Activated CD4-positive, alpha-beta memory T cell treated with anti-CD3 and anti-CD28 coated beads, Interleukin-2, amount 10 ng/mL, durations not matched to agents 7 days and 5 days (primary cell): ENCODE measurements at regions of chr16 and their contacts with region 1.

Region 1: DNA sequence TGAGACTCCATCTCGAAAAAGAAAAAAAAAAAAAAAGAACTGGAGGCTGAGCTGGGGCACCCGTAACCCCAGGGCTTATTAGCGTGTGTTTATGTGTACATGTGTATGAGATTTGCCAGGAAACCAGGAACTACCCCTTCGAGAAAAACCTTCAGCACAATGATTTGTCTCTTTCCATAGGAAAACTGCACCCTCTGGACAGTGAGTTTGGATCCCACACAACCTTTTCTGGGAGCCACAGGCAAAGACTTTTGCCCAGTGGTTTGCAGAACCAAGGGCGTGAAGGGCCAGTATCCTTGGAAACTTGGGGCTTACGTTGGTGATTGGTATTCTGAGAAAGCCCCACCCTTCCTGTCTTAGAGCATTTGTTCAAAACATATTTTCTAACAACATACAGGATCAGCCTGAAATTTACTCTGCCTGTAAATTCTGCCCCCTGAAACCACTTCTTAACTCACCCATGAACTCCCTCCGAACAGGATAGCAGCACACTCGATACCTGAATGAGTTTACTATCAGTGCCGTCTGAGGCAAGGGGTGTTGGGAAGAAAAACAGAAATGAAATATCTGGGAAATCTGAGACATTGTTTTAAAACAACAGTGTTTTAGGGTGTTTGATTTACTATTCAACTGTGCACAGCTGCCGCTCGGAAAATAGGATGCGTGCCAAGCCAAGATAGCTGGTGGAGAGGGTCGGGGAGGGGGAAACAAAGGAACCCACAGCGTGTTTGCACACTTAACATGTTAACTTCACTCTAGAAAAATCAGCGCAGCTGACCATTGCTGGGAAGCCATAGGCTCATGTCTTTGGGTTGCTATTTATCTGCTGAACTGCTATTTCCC is 40.2 kb upstream of the MAF start:
- DNase-seq: peak; percentile 50
- H3K4me3 Mint-ChIP-seq: peak overlapping the region; percentile 28
- H3K27ac Mint-ChIP-seq: peak overlapping the region; percentile 97
- H3K4me1 Mint-ChIP-seq: peaks cover 61% of the 10 kb centered on the region
- H3K27me3 Mint-ChIP-seq: no peaks in the 10 kb centered on the region

Region 2: DNA sequence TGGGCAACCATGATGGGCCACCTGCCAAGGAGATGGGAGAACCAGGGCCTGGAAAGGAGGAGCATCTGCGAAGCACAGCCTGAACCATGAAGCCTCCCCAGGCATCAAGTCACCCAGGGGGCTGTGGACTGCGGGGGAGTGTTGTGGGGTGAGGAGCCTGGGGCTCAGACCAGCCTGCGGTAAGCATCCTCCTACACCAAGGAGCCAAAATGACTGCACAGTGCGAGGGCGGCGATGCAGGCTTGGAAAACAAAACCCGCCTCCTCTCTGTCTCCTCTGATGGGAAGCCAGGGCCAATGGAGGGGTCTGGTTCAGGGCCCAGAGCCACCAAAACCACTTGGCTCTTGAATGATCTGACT is 22.1 kb before region 1 on chr16:
- CTCF ChIA-PET with region 1: interaction called, 7 read pairs
- POLR2A ChIA-PET with region 1: interaction called, 71 read pairs
- DNase-seq: peak; percentile 65
- H3K4me3 Mint-ChIP-seq: peak overlapping the region; percentile 53
- H3K27ac Mint-ChIP-seq: peak overlapping the region; percentile 98
- H3K4me1 Mint-ChIP-seq: peaks cover 76% of the 10 kb centered on the region
- H3K27me3 Mint-ChIP-seq: peaks cover 9% of the 10 kb centered on the region

Region 3: DNA sequence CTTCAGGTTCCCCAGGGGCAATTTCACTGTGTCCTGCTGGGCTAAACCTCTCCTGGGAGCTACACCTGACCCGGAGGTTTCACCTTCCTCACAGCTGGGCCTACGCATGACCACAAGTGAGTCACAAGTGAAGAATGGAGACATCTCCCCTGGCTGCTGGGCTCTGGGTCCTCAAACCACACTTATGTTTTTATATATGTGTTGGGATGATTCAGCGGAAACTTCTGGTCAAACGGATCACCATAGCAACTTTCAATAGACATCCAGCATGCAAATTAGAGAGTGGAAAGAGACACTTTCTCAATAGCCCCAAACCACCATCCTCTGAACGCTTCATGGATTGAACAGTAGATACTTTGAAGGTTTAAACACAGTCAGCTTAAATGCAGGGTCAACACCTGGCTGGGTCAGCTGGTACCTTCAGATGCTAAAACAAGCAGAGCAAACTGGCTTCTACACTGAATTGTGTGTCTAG is 12.2 kb before region 1 on chr16:
- CTCF ChIA-PET with region 1: interaction called, 11 read pairs
- POLR2A ChIA-PET with region 1: interaction called, 47 read pairs
- DNase-seq: peak; percentile 87
- H3K4me3 Mint-ChIP-seq: peak overlapping the region; percentile 17
- H3K27ac Mint-ChIP-seq: peak overlapping the region; percentile 59
- H3K4me1 Mint-ChIP-seq: peaks cover 85% of the 10 kb centered on the region
- H3K27me3 Mint-ChIP-seq: peaks cover 17% of the 10 kb centered on the region